Mucosa of descending colon (tissue), 3 donors: ENCODE measurements at regions of chr11 and their contacts with region 1.

Region 1: DNA sequence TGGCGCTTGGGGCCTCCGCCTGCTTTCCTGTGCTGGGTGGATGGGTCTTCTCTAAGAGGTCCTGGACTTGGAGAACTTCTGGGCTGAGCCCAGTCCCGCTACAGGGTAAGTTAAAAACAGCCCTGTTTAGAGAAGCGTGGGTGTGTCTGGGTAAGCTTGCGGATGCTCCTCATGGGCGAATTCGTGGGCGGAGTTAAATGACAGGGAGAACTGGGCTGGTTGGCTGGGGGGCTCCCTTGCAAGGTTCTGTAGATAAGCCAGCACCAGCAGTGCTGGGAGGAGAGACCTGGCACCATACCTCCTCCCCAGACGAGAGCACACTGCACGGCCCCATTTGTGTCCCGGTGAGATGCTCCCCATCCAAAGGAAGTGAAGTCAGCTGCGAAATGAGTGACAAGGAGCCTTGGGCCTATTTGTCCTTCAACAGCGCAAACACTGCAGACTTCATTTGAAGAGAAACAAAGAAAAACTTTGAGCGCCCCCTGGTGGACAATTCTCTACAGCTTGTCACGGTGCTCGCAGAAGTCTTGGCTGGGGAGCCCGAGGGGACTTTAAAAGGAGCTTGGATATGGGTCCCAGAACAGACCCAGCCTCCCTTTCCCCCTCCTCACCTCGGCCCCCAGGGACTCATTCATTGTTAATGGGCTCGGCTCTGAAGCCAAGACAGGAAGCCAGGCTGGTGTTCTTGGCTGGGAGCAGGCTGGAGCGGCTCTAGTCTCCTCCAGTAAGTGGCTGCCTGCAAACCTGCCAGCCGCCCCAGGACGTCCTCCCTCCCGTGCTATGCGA is 39.5 kb downstream of the TP53I11 start:
- DNase-seq: peak in 2 of 3 donors; percentile 64 to 98
- ATAC-seq: peak; percentile 80
- H3K4me3 ChIP-seq: no peak overlapping the region
- H3K4me1 ChIP-seq: peaks cover 9% of the 10 kb centered on the region
- CTCF ChIP-seq: peak; percentile 53

Region 2: GRCh38 chr11:44556735-44557409 is 354.4 kb before region 1 on chr11:
- intact Hi-C with region 1: loop called in 1 of 2 experiments (anchors 10 kb)
- DNase-seq: peak in 2 of 3 donors; percentile 70 to 82
- ATAC-seq: peak; percentile 74
- H3K4me3 ChIP-seq: no peak overlapping the region
- H3K4me1 ChIP-seq: no peaks in the 10 kb centered on the region
- CTCF ChIP-seq: peak; percentile 69

Region 3: GRCh38 chr11:44621140-44621681 is 290.0 kb before region 1 on chr11:
- intact Hi-C with region 1: loop called in 1 of 2 experiments (anchors 5 kb)
- DNase-seq: peak in 2 of 3 donors; percentile 81 to 87
- ATAC-seq: peak; percentile 86
- H3K4me3 ChIP-seq: no peak overlapping the region
- H3K4me1 ChIP-seq: peaks cover 4% of the 10 kb centered on the region
- CTCF ChIP-seq: peak; percentile 94

Region 4: GRCh38 chr11:44727373-44728287 is 183.6 kb before region 1 on chr11:
- intact Hi-C with region 1: loop called (anchors 5 to 10 kb)
- DNase-seq: peak; percentile 76 to 84 (median 83)
- ATAC-seq: peak; percentile 89
- H3K4me3 ChIP-seq: no peak overlapping the region
- H3K4me1 ChIP-seq: peaks cover 8% of the 10 kb centered on the region
- CTCF ChIP-seq: peak; percentile 98

Region 5: GRCh38 chr11:44977476-44977984 is 66.3 kb after region 1 on chr11:
- intact Hi-C with region 1: no loop called
- DNase-seq: peak in 2 of 3 donors; percentile 56 to 67
- ATAC-seq: no peak
- H3K4me3 ChIP-seq: no peak overlapping the region
- H3K4me1 ChIP-seq: peaks cover 50% of the 10 kb centered on the region
- CTCF ChIP-seq: no peak